ENCODE measurements at regions of chr6 and their contacts with region 1.

Region 1: DNA sequence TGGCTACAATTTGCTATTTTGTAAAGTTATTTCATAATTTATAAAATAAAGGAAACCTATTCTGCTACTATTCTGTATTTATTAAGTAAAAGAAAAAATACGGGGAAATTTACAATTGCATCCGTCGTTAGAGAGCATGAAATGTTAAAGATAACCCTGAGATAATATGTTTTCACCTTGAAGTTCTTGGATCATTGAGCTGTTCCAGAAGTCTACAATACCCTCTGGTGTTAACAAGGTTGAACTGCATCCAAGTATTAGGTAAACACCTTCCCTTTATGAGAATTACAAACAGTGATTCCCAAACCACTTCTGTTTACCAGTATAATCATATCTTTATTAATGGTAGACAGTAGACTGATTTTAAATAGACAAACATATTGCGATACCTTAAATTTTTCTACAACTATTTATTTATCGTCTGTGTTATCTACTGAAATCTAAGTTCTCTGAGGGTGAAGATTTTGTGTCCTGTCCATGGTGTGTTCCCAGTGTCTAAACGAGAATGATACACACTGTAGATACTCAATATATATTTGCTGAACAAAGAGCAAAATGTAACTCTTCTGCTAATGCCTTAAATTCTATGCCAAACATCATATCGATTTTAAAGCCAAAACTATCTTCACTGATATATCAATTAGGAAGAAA is 28.2 kb downstream of the TBC1D32 start:
- DNase-seq: no peak
- H3K4me3 Mint-ChIP-seq: no peak overlapping the region
- H3K27ac Mint-ChIP-seq: no peak overlapping the region
- H3K4me1 Mint-ChIP-seq: peaks cover 7% of the 10 kb centered on the region
- H3K27me3 Mint-ChIP-seq: no peaks in the 10 kb centered on the region

Region 2: GRCh38 chr6:120671519-120671918 is 634.6 kb before region 1 on chr6:
- CTCF ChIA-PET with region 1: no interaction called
- DNase-seq: no peak
- H3K4me3 Mint-ChIP-seq: no peak overlapping the region
- H3K27ac Mint-ChIP-seq: no peak overlapping the region
- H3K4me1 Mint-ChIP-seq: no peaks in the 10 kb centered on the region
- H3K27me3 Mint-ChIP-seq: no peaks in the 10 kb centered on the region

Region 3: GRCh38 chr6:121055572-121056163 is 250.4 kb before region 1 on chr6:
- CTCF ChIA-PET with region 1: interaction called, 59 read pairs
- DNase-seq: no peak
- H3K4me3 Mint-ChIP-seq: no peak overlapping the region
- H3K27ac Mint-ChIP-seq: no peak overlapping the region
- H3K4me1 Mint-ChIP-seq: no peaks in the 10 kb centered on the region
- H3K27me3 Mint-ChIP-seq: no peaks in the 10 kb centered on the region